ENCODE measurements at regions of chr11 and their contacts with region 1.

Region 1: GRCh38 chr11:117606211-117606610 is 190.8 kb downstream of the DSCAML1 start:
- DNase-seq: no peak
- ATAC-seq: peak; percentile 73
- H3K4me3 Mint-ChIP-seq: no peak overlapping the region
- H3K27ac Mint-ChIP-seq: peak overlapping the region; percentile 16
- H3K4me1 Mint-ChIP-seq: peaks cover 18% of the 10 kb centered on the region
- H3K27me3 Mint-ChIP-seq: no peaks in the 10 kb centered on the region

Region 2: GRCh38 chr11:117519170-117519569 is 87.0 kb before region 1 on chr11:
- CTCF ChIA-PET with region 1: no interaction called
- POLR2A ChIA-PET with region 1: no interaction called
- DNase-seq: no peak
- ATAC-seq: no peak
- H3K4me3 Mint-ChIP-seq: no peak overlapping the region
- H3K27ac Mint-ChIP-seq: no peak overlapping the region
- H3K4me1 Mint-ChIP-seq: no peaks in the 10 kb centered on the region
- H3K27me3 Mint-ChIP-seq: no peaks in the 10 kb centered on the region

Region 3: GRCh38 chr11:117621226-117621625 is 15.0 kb after region 1 on chr11:
- CTCF ChIA-PET with region 1: interaction called, 10 read pairs
- POLR2A ChIA-PET with region 1: interaction called, 4 read pairs
- DNase-seq: peak; percentile 26
- ATAC-seq: no peak
- H3K4me3 Mint-ChIP-seq: no peak overlapping the region
- H3K27ac Mint-ChIP-seq: no peak overlapping the region
- H3K4me1 Mint-ChIP-seq: no peaks in the 10 kb centered on the region
- H3K27me3 Mint-ChIP-seq: peaks cover 5% of the 10 kb centered on the region

Region 4: GRCh38 chr11:117743123-117743815 is 137.1 kb after region 1 on chr11:
- CTCF ChIA-PET with region 1: no interaction called
- POLR2A ChIA-PET with region 1: no interaction called
- DNase-seq: no peak
- ATAC-seq: no peak
- H3K4me3 Mint-ChIP-seq: no peak overlapping the region
- H3K27ac Mint-ChIP-seq: no peak overlapping the region
- H3K4me1 Mint-ChIP-seq: peaks cover 5% of the 10 kb centered on the region
- H3K27me3 Mint-ChIP-seq: peaks cover 11% of the 10 kb centered on the region